Activated naive CD4-positive, alpha-beta T cell treated with anti-CD3 and anti-CD28 coated beads for 36 hours (primary cell): ENCODE measurements at regions of chr10 and their contacts with region 1.

Region 1: DNA sequence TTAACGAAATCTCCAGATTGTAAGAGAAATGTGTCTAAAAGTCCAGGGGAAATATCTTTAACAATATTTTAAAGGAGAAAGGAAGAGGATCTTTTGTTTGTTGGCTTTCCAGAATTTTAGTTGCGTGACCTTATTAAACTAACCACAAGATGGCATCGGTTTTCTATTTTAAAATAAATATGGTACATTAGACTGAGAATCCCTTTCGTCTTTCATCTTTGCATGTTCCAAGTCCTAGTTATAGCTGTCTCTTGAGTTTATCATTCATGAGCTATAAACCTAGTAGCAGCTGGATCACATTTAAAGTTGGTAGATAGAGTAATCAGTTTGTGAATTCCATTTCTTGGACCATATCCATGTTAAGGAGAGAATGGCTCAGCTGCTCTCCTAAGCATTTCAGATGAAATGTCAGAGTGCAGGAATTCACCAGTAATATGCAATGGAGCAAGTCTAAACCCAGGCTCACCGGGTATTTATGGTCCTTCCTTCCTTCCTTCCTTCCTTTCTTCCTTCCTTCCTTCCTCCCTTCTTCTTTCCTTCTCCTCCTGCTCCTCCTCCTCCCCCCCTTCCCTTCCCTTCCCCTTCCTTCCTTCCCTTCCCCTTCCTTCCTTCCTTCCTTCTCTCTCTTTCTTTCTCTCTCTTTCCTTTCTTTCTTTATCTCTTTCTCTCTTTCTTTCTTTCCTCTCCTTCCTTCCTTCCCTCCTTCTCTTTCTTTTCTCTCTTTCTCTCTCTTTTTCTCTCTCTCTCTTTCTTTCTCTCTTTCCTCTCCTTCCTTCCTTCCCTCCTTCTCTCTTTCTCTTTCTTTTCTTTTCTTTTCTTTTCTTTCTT is 57.8 kb upstream of the RAB18 start:
- DNase-seq: no peak
- H3K4me3 Mint-ChIP-seq: no peak overlapping the region
- H3K27ac Mint-ChIP-seq: no peak overlapping the region
- H3K4me1 Mint-ChIP-seq: peaks cover 7% of the 10 kb centered on the region
- H3K27me3 Mint-ChIP-seq: no peaks in the 10 kb centered on the region

Region 2: DNA sequence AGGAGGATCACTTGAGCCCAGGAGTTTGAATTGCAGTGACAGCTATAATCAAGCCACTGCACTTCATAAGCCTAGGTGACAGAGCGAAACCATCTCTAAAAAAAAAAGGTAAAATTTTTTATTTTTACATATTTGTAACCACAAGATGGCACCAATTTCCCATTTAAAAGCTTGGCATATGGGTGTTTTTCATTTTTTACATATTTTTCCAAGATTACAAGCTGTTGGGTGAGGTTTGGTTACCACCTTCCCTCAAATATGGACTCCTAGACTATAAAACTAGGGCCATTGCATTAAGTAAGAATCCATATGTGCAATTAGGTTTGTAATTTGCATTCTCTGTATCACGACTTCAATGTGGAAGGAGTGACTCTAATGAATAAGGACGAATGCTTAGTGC is 76.4 kb before region 1 on chr10:
- CTCF ChIA-PET with region 1: interaction called, 8 read pairs
- intact Hi-C with region 1: loop called (anchors 2 kb)
- DNase-seq: no peak
- H3K4me3 Mint-ChIP-seq: no peak overlapping the region
- H3K27ac Mint-ChIP-seq: no peak overlapping the region
- H3K4me1 Mint-ChIP-seq: peaks cover 12% of the 10 kb centered on the region
- H3K27me3 Mint-ChIP-seq: no peaks in the 10 kb centered on the region

Region 3: GRCh38 chr10:27426948-27427467 is 19.3 kb before region 1 on chr10:
- CTCF ChIA-PET with region 1: no interaction called
- intact Hi-C with region 1: no loop called
- DNase-seq: no peak
- H3K4me3 Mint-ChIP-seq: no peak overlapping the region
- H3K27ac Mint-ChIP-seq: no peak overlapping the region
- H3K4me1 Mint-ChIP-seq: no peaks in the 10 kb centered on the region
- H3K27me3 Mint-ChIP-seq: peaks cover 7% of the 10 kb centered on the region

Region 4: DNA sequence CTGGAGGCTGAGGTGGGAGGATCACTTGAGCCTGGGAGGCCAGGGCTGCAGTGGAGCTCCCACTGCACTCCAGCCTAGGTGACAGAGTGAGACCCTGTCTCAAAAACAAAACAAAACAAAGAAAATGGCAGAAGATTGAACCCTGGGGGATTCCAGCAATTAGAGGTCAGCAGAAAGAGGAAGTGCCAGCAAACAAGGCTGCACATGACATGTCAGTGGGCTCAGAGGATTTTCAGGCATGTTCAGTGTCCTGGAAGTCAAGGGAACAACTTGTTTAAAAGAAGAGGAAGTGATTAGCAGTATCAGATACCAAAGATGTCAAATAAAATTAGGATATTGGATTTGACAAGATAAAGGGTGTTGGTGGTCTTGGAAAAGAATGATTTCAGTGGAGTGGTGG is 90.1 kb after region 1 on chr10:
- CTCF ChIA-PET with region 1: interaction called, 4 read pairs
- intact Hi-C with region 1: loop called (anchors 5 kb)
- DNase-seq: no peak
- H3K4me3 Mint-ChIP-seq: no peak overlapping the region
- H3K27ac Mint-ChIP-seq: no peak overlapping the region
- H3K4me1 Mint-ChIP-seq: peaks cover 20% of the 10 kb centered on the region
- H3K27me3 Mint-ChIP-seq: no peaks in the 10 kb centered on the region

Region 5: DNA sequence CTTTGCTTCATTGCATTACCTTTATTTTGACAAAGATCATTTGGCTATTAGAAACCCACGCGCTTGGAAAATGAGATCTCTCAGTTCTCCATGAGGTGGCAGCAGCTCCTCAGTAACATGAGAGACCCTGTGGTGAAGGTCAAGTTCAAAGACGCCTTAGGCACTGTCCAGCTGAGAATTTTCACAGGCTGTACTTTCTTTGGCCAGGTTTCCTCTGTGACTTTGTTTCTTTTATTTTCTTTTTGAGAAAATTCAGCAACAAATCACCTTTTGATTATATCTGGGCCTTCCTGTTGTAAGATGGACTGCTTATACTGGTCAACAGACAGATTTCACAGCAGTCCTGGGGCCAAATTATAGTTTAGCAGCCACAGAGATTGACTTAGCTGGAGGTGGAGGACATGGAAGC is 112.3 kb after region 1 on chr10:
- CTCF ChIA-PET with region 1: interaction called, 3 read pairs
- intact Hi-C with region 1: loop called (anchors 5 kb)
- DNase-seq: peak; percentile 60
- H3K4me3 Mint-ChIP-seq: no peak overlapping the region
- H3K27ac Mint-ChIP-seq: no peak overlapping the region
- H3K4me1 Mint-ChIP-seq: no peaks in the 10 kb centered on the region
- H3K27me3 Mint-ChIP-seq: no peaks in the 10 kb centered on the region

Region 6: GRCh38 chr10:27661514-27662286 is 215.4 kb after region 1 on chr10:
- CTCF ChIA-PET with region 1: interaction called, 6 read pairs
- intact Hi-C with region 1: loop called (anchors 1 kb)
- DNase-seq: no peak
- H3K4me3 Mint-ChIP-seq: no peak overlapping the region
- H3K27ac Mint-ChIP-seq: no peak overlapping the region
- H3K4me1 Mint-ChIP-seq: no peaks in the 10 kb centered on the region
- H3K27me3 Mint-ChIP-seq: peaks cover 18% of the 10 kb centered on the region